HEK293T (cell line): ENCODE measurements at regions of chr2 and their contacts with region 1.

Region 1: GRCh38 chr2:30421604-30422443 is 25.2 kb upstream of the LCLAT1 start:
- DNase-seq: no peak

Region 2: GRCh38 chr2:30447149-30448045 is 25.6 kb after region 1 on chr2 and contains the start of gene LCLAT1:
- CTCF ChIA-PET with region 1: no interaction called
- POLR2A ChIA-PET with region 1: interaction called, 12 read pairs
- DNase-seq: peak; percentile 81